ENCODE measurements at regions of chr18 and their contacts with region 1.

Region 1: DNA sequence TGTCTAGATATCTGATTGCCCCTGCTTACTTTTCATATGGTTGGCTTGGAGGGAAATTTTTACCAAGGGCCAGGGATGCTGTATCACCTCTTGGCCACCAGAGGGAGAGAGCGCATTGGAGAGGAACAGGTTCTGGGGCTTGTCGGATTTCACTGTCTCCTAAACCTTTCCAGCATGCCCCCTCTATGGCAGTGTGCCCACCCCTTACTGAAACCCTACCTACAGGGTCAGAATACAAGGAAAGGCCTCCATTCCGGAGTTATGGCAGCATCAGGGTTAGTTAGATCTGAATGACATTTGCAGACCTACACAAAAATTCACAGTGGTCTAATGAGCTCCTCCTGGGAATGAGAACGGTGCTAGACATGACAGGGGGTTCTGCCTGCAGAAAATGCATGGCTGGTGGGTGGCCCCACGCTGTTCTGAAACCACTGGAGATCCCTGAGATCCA is 5.8 kb downstream of the SLC14A2 start:
- DNase-seq: peak; percentile 74
- H3K4me3 ChIP-seq: no peak overlapping the region
- H3K27ac ChIP-seq: no peak overlapping the region
- H3K4me1 ChIP-seq: peaks cover 0 to 10% of the 10 kb centered on the region in 2 experiments; a peak in 2 of 4 replicates
- H3K27me3 ChIP-seq: no peaks in the 10 kb centered on the region
- CTCF ChIP-seq: peak; percentile 94
- EP300 ChIP-seq: no peak
- RAD21 ChIP-seq: peak; percentile 68

Region 2: GRCh38 chr18:43863180-43863579 is 1757.9 kb before region 1 on chr18:
- CTCF ChIA-PET with region 1: no interaction called
- POLR2A ChIA-PET with region 1: no interaction called
- DNase-seq: no peak
- H3K4me3 ChIP-seq: no peak overlapping the region
- H3K27ac ChIP-seq: no peak overlapping the region
- H3K4me1 ChIP-seq: no peaks in the 10 kb centered on the region; a peak in 1 of 4 replicates
- H3K27me3 ChIP-seq: no peaks in the 10 kb centered on the region
- CTCF ChIP-seq: no peak
- EP300 ChIP-seq: no peak
- RAD21 ChIP-seq: no peak

Region 3: GRCh38 chr18:45303026-45303425 is 318.1 kb before region 1 on chr18:
- CTCF ChIA-PET with region 1: no interaction called
- POLR2A ChIA-PET with region 1: no interaction called
- DNase-seq: no peak
- H3K4me3 ChIP-seq: no peak overlapping the region
- H3K27ac ChIP-seq: no peak overlapping the region
- H3K4me1 ChIP-seq: peaks cover 0 to 2% of the 10 kb centered on the region in 2 experiments; a peak in 1 of 4 replicates
- H3K27me3 ChIP-seq: no peaks in the 10 kb centered on the region
- CTCF ChIP-seq: no peak
- EP300 ChIP-seq: no peak
- RAD21 ChIP-seq: no peak

Region 4: GRCh38 chr18:45335282-45336043 is 285.6 kb before region 1 on chr18:
- CTCF ChIA-PET with region 1: no interaction called
- POLR2A ChIA-PET with region 1: no interaction called
- DNase-seq: no peak
- H3K4me3 ChIP-seq: no peak overlapping the region
- H3K27ac ChIP-seq: no peak overlapping the region
- H3K4me1 ChIP-seq: no peaks in the 10 kb centered on the region
- H3K27me3 ChIP-seq: no peaks in the 10 kb centered on the region
- CTCF ChIP-seq: no peak
- EP300 ChIP-seq: no peak
- RAD21 ChIP-seq: no peak

Region 5: GRCh38 chr18:45539491-45539891 is 81.6 kb before region 1 on chr18:
- CTCF ChIA-PET with region 1: no interaction called
- POLR2A ChIA-PET with region 1: no interaction called
- DNase-seq: no peak
- H3K4me3 ChIP-seq: no peak overlapping the region
- H3K27ac ChIP-seq: no peak overlapping the region
- H3K4me1 ChIP-seq: no peaks in the 10 kb centered on the region; a peak in 1 of 4 replicates
- H3K27me3 ChIP-seq: no peaks in the 10 kb centered on the region
- CTCF ChIP-seq: no peak
- EP300 ChIP-seq: no peak
- RAD21 ChIP-seq: no peak

Region 6: DNA sequence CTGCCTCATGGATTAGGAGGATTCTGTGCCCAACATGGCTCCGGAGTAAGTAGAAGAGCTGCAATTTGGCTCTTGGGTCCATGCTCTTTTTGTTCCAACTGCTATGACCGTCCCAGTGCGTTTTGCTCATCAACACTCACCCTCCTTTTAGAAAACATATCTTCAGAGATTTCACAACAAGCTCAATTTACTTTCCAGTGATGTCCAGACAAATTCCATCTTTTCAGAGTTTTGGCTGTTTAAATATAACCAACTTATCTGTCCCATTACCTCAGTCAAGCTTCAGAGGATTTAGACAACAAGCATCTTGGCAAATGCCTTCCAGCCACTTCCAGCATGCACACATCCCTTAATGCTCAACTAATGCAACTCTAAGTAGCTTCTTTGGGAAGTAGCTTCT is 12.7 kb before region 1 on chr18:
- CTCF ChIA-PET with region 1: interaction called, 57 read pairs
- POLR2A ChIA-PET with region 1: no interaction called
- DNase-seq: no peak
- H3K4me3 ChIP-seq: no peak overlapping the region
- H3K27ac ChIP-seq: no peak overlapping the region
- H3K4me1 ChIP-seq: no peaks in the 10 kb centered on the region; a peak in 1 of 4 replicates
- H3K27me3 ChIP-seq: peaks cover 24% of the 10 kb centered on the region; the same call in 1 of the 2 replicates
- CTCF ChIP-seq: no peak
- EP300 ChIP-seq: no peak
- RAD21 ChIP-seq: no peak

Region 7: GRCh38 chr18:45637546-45638327 is 16.7 kb after region 1 on chr18:
- CTCF ChIA-PET with region 1: interaction called, 16 read pairs
- POLR2A ChIA-PET with region 1: no interaction called
- DNase-seq: no peak
- H3K4me3 ChIP-seq: no peak overlapping the region
- H3K27ac ChIP-seq: no peak overlapping the region
- H3K4me1 ChIP-seq: no peaks in the 10 kb centered on the region
- H3K27me3 ChIP-seq: peaks cover 9% of the 10 kb centered on the region; the same call in 1 of the 2 replicates
- CTCF ChIP-seq: no peak
- EP300 ChIP-seq: no peak
- RAD21 ChIP-seq: no peak

Region 8: DNA sequence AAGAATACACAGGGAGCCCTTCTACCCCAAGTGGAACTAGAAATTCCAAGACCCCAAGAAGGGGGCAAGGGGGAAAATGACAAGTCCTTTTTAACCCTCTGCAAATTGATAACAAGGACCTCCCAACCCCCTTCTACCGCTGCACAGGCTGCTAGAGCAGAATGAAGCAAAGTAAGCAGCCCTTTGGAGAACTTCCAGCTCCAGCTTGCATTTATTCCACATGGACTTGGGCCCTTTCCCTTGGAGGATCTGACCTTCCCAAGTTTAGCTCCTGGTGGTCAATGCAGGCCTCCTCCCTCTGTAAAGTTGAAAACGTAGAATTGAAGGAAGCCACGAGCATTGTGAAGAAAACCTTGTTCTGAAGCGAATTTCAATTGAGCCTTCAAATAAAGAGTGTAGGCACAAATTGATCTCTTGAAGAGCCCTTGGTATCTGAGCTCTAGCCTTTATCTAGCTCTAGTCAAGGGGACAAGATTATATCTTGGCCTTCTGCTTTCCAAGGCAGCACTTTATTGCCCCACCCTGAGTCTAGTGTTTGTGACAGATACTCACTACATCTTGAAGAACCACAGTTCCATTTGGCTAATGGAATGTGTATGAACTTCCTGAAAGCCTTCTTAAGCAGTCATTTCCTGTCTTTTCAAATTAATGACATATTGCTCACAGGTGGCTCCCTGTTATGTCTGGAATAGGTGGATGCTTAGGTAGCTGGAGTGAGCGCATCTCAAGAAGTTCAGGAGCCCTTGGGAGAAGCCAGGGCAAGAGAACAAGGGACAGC is 31.4 kb after region 1 on chr18:
- CTCF ChIA-PET with region 1: interaction called, 15 read pairs
- POLR2A ChIA-PET with region 1: no interaction called
- DNase-seq: no peak
- H3K4me3 ChIP-seq: no peak overlapping the region
- H3K27ac ChIP-seq: no peak overlapping the region
- H3K4me1 ChIP-seq: peaks cover 0 to 9% of the 10 kb centered on the region in 2 experiments; a peak in 1 of 4 replicates
- H3K27me3 ChIP-seq: no peaks in the 10 kb centered on the region
- CTCF ChIP-seq: no peak
- EP300 ChIP-seq: no peak
- RAD21 ChIP-seq: no peak

Measured in SK-N-SH (cell line).